ENCODE measurements at regions of chr12 and their contacts with region 1.

Region 1: DNA sequence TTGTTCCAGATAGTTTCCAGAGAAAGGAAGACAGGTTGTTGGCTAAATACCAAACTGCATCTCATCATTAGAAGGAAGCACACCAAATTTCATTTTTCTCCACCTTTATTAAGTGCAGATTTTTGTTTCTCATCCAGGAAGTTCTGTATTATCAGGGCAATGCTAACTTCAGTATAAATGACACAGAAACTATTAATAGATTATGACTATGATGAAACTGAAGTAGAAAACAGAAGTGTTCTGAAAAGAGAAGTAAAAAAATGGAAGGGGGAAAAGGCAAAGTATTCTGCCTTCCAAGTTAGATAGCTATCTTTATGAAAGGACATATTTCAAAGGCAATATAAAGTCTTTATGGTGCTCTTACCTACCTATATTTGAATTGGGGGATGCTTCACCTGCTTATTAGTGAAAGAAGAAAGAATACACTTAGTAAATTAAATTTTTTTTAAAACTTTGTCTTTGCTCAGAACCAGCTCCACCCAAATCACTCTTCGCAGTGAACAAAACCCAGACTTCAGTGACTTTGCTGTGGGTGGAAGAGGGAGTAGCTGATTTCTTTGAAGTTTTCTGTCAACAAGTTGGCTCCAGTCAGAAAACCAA is 223.9 kb downstream of the PTPRO start:
- DNase-seq: peak in 7 of 9 donors; percentile 73 to 89 (median 85)
- ATAC-seq: peak; percentile 93
- H3K4me3 ChIP-seq: no peak overlapping the region
- H3K4me3 Mint-ChIP-seq: peak overlapping the region; percentile 36 to 85 (median 76)
- H3K27ac ChIP-seq: peak overlapping the region; percentile 74
- H3K27ac Mint-ChIP-seq: peak overlapping the region; percentile 95 to 100 (median 98)
- H3K4me1 ChIP-seq: peaks cover 0 to 50% of the 10 kb centered on the region in 2 donors
- H3K4me1 Mint-ChIP-seq: peaks cover 30 to 98% (median 86%) of the 10 kb centered on the region in 7 donors
- H3K27me3 ChIP-seq: peaks cover 0 to under 1% of the 10 kb centered on the region in 2 donors
- H3K27me3 Mint-ChIP-seq: no peaks in the 10 kb centered on the region

Region 2: DNA sequence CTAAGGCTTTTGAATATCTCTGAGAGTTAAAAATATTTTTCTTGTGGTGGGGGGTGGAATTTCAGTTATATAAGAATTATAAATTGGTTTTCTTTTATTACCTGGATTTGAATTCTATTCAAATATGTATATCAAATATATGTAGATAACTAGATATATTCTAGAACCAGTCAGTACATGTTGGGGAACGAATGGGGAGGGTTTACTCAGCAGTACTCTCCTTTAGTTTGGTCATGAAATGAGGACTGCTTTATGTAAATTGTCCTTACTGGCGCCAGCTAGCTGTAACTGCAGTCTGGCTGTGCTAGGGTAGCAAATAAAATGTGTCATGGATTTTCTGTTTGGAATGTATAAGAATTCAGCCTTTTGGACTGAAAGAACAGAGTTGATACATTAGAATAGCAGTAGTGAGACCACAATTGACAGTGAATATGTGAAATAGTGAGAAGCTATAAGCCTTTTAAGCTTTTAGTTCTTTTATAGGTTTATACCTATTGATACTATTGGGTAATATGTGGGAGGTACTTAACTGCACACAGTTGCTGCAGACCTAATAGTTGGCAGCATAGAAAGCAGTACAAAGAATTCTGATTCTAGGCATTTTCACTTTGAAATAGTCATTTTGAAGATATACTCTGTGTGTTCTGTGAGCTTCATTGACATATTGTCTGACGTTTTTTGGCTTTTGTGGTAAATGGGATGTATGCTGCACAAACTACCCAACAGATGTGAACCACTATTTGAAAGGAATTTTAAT is 1151.7 kb before region 1 on chr12:
- CTCF ChIA-PET with region 1: no interaction called
- POLR2A ChIA-PET with region 1: no interaction called
- intact Hi-C with region 1: loop called in 1 of 2 experiments (anchors 10 kb)
- DNase-seq: peak in 7 of 9 donors; percentile 57 to 82 (median 71)
- ATAC-seq: peak; percentile 86
- H3K4me3 ChIP-seq: peak overlapping the region; percentile 33
- H3K4me3 Mint-ChIP-seq: peak overlapping the region; percentile 49 to 87 (median 76)
- H3K27ac ChIP-seq: peak overlapping the region; percentile 75
- H3K27ac Mint-ChIP-seq: peak overlapping the region; percentile 83 to 97 (median 95)
- H3K4me1 ChIP-seq: peaks cover 62 to 84% of the 10 kb centered on the region in 2 donors
- H3K4me1 Mint-ChIP-seq: peaks cover 47 to 99% (median 91%) of the 10 kb centered on the region in 7 donors
- H3K27me3 ChIP-seq: no peaks in the 10 kb centered on the region
- H3K27me3 Mint-ChIP-seq: no peaks in the 10 kb centered on the region

Region 3: GRCh38 chr12:14701809-14702568 is 844.2 kb before region 1 on chr12:
- CTCF ChIA-PET with region 1: no interaction called
- POLR2A ChIA-PET with region 1: no interaction called
- intact Hi-C with region 1: no loop called
- DNase-seq: no peak
- ATAC-seq: no peak
- H3K4me3 ChIP-seq: no peak overlapping the region
- H3K4me3 Mint-ChIP-seq: no peak overlapping the region
- H3K27ac ChIP-seq: no peak overlapping the region
- H3K27ac Mint-ChIP-seq: no peak overlapping the region
- H3K4me1 ChIP-seq: no peaks in the 10 kb centered on the region
- H3K4me1 Mint-ChIP-seq: no peaks in the 10 kb centered on the region
- H3K27me3 ChIP-seq: no peaks in the 10 kb centered on the region
- H3K27me3 Mint-ChIP-seq: peaks cover 8 to 21% (median 12%) of the 10 kb centered on the region in 5 donors

Region 4: DNA sequence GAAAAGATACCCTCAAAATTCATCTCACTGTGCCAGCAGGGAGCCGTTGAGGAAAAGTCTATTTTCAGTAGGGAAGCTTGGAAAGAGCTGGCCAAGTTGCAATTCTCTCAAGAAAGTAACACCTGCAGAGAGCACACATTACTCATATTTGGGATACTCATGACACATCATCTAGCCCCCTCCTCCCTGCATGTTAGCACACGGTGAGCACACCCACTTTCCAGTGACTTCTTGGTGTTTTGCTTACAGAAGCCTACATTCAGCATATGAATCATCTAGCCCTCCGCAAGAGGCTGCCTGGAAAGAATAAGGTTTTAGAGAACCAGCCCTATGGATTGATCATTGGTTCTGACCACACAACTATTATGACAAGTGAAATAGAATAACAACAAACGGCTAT is 99.4 kb before region 1 on chr12:
- CTCF ChIA-PET with region 1: no interaction called
- POLR2A ChIA-PET with region 1: no interaction called
- intact Hi-C with region 1: no loop called
- DNase-seq: no peak
- ATAC-seq: no peak
- H3K4me3 ChIP-seq: no peak overlapping the region
- H3K4me3 Mint-ChIP-seq: no peak overlapping the region
- H3K27ac ChIP-seq: no peak overlapping the region
- H3K27ac Mint-ChIP-seq: no peak overlapping the region
- H3K4me1 ChIP-seq: no peaks in the 10 kb centered on the region
- H3K4me1 Mint-ChIP-seq: peaks cover 0 to 3% (median 0%) of the 10 kb centered on the region in 7 donors
- H3K27me3 ChIP-seq: no peaks in the 10 kb centered on the region
- H3K27me3 Mint-ChIP-seq: peaks cover 8 to 15% (median 10%) of the 10 kb centered on the region in 5 donors

Region 5: DNA sequence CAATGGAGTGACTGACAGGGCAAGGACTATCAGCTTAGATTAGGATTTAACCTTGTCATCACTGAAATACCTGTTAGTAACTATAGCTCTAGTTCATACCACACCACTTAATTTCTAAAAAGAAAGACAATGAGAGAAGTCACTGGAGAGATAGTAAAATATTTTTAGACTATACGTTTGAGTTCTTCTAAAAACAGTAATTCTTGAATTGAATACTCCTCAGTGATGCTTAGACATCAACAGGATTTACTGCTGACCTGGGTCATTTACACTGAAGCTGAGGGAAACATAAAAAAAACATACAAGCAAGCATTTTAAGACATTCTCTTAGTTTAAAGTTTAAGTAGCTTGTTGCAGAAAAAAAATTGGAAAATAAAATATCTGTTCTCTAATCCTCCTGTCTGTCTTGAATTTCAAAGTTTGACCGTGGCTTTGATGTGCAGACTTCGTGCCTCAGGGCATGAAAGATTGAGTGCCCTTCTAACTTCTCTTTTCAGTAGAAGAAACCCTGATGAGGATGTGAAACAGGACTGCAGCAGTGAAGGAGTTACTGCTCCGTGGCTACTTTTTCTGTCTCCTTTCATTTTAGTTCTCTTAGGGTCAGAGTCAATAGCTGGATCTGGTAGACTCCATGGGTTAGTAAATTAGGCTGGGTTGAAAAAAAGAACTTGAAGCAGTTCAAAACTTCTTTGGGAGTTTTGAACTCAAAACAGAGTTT is 51.7 kb before region 1 on chr12:
- CTCF ChIA-PET with region 1: no interaction called
- POLR2A ChIA-PET with region 1: no interaction called
- intact Hi-C with region 1: no loop called
- DNase-seq: no peak
- ATAC-seq: no peak
- H3K4me3 ChIP-seq: no peak overlapping the region
- H3K4me3 Mint-ChIP-seq: no peak overlapping the region
- H3K27ac ChIP-seq: no peak overlapping the region
- H3K27ac Mint-ChIP-seq: no peak overlapping the region
- H3K4me1 ChIP-seq: no peaks in the 10 kb centered on the region
- H3K4me1 Mint-ChIP-seq: peaks cover 0 to 7% (median 0%) of the 10 kb centered on the region in 7 donors
- H3K27me3 ChIP-seq: no peaks in the 10 kb centered on the region
- H3K27me3 Mint-ChIP-seq: peaks cover 19 to 55% (median 32%) of the 10 kb centered on the region in 5 donors

Region 6: GRCh38 chr12:15563663-15564062 is 17.5 kb after region 1 on chr12:
- CTCF ChIA-PET with region 1: interaction called, 87 read pairs
- POLR2A ChIA-PET with region 1: interaction called, 730 read pairs
- intact Hi-C with region 1: loop called (anchors 1 kb)
- DNase-seq: peak in 6 of 9 donors; percentile 39 to 54 (median 50)
- ATAC-seq: peak; percentile 84
- H3K4me3 ChIP-seq: peak overlapping the region; percentile 38
- H3K4me3 Mint-ChIP-seq: peak overlapping the region; percentile 54 to 87 (median 82)
- H3K27ac ChIP-seq: peak overlapping the region; percentile 82
- H3K27ac Mint-ChIP-seq: peak overlapping the region; percentile 87 to 96 (median 94)
- H3K4me1 ChIP-seq: peaks cover 0 to 37% of the 10 kb centered on the region in 2 donors
- H3K4me1 Mint-ChIP-seq: peaks cover 36 to 89% (median 77%) of the 10 kb centered on the region in 7 donors
- H3K27me3 ChIP-seq: no peaks in the 10 kb centered on the region
- H3K27me3 Mint-ChIP-seq: peaks cover 0 to 5% (median 0%) of the 10 kb centered on the region in 5 donors

Region 7: DNA sequence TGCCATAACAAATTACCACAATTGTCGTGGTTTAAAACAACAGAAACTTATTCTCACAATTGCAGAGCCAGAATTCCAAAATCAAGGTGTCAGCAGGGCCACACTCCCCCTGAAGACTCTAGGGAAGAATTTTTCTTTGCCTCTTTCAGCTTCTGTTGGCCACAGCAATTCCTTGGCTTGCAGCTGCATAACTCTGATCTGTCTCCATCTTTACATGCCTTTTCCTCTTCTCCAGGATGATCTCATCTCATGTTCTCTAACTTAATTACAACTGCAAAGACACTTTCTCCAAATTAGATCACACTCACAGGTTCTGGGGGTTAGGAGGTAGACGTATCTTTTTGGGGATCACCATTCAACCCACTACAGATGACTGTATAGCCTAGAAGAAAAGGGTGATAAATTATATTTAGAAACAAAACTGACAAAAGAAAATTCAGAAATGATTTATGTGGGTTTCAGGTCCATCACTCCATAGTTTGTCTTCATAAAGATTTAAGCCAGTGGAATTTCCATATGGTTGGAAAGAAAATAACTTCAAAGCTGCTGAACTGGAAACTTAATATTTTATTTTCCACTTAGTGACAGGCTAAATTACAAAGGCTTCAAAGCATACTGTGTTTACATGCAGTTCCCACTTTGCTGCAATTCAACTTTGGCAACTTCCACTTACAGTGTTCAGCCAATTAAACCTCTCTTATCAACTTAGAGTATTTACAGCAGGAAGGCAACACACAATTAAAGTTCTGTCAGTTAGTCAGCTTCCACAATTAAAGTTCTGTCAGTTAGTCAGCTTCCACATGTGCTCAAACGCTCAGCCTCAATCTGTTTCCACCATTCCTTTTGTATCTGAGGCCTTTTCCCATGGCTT is 29.7 kb after region 1 on chr12:
- CTCF ChIA-PET with region 1: interaction called, 12 read pairs
- POLR2A ChIA-PET with region 1: interaction called, 730 read pairs
- intact Hi-C with region 1: loop called (anchors 1 kb)
- DNase-seq: no peak
- ATAC-seq: no peak
- H3K4me3 ChIP-seq: no peak overlapping the region
- H3K4me3 Mint-ChIP-seq: peak overlapping the region in 3 of 10 donors; percentile 0 to 48 (median 21)
- H3K27ac ChIP-seq: no peak overlapping the region
- H3K27ac Mint-ChIP-seq: peak overlapping the region in 6 of 9 donors; percentile 6 to 74 (median 24)
- H3K4me1 ChIP-seq: peaks cover 0 to 7% of the 10 kb centered on the region in 2 donors
- H3K4me1 Mint-ChIP-seq: peaks cover 11 to 63% (median 47%) of the 10 kb centered on the region in 7 donors
- H3K27me3 ChIP-seq: no peaks in the 10 kb centered on the region
- H3K27me3 Mint-ChIP-seq: no peaks in the 10 kb centered on the region

Measured in naive thymus-derived CD4-positive, alpha-beta T cell (primary cell).